Heart left ventricle (tissue), 16 donors: ENCODE measurements at regions of chr14 and their contacts with region 1.

Region 1: DNA sequence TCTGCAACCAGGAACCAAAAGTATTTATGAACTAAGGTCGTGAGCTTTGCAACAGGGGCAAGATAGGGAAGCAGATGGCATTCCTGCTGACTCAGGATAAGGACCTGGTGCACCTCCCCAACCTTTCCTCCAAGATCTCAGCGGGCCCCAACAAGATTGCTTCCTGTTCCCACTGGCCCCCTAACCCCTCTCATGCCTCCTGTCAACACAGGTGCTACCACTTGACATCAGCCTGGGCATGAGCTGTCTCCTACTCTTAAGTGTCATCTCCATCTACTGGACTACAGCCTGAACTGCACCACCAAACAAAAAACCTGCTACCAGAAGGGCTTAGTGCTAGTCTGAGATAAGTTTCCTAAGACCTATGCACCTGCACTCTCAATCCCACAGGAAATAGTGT is 32.7 kb downstream of the MED6 start:
- DNase-seq: no peak
- ATAC-seq: peak in 2 of 4 donors; percentile 55 to 63
- H3K4me3 ChIP-seq: no peak overlapping the region
- H3K27ac ChIP-seq: no peak overlapping the region
- H3K4me1 ChIP-seq: peaks cover 0 to 4% (median 0%) of the 10 kb centered on the region in 12 donors
- H3K27me3 ChIP-seq: no peaks in the 10 kb centered on the region
- CTCF ChIP-seq: peak in 11 of 12 donors; percentile 14 to 44 (median 29)
- POLR2A ChIP-seq: no peak

Region 2: DNA sequence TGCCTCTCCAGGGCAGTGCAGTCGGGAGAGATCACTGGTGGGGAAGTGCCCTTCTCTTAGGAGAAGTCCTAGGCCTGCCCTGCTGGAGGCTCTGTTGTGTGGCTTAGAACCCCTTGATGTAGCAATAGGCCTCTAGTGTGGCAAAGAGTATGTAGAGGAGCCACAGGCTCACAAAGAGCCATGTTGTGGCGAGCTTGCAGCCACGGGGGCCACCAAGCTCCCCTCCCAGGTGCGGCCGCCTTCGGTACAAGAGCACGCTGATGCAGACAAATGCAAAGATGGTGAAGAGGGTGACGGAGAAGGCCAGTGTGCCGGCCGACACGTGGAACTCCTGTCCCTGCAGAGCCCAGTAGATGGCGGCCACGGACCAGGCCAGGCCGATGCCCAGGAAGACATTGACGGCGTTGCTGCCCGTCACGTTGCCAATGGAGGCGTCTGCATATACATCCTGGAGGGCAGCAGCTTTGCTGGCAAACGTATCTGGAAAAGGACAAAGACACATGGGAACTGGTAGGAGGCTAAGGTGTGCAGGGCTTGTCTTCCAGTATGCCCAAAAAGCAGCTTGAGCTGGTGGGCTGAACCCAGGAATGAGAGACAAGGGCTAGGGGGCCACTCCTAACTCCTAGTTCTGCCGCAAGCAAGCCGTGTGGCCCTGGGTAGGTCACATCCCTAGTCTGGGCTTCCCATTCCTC is 521.8 kb before region 1 on chr14:
- intact Hi-C with region 1: loop called in 1 of 10 experiments (anchors 5 kb)
- DNase-seq: peak in 4 of 5 donors; percentile 37 to 71 (median 48)
- ATAC-seq: peak in 3 of 4 donors; percentile 80 to 89 (median 89)
- H3K4me3 ChIP-seq: no peak overlapping the region
- H3K27ac ChIP-seq: no peak overlapping the region
- H3K4me1 ChIP-seq: no peaks in the 10 kb centered on the region
- H3K27me3 ChIP-seq: peaks cover 0 to 39% (median 7%) of the 10 kb centered on the region in 9 donors
- CTCF ChIP-seq: peak; percentile 45 to 73 (median 58)
- POLR2A ChIP-seq: no peak

Region 3: DNA sequence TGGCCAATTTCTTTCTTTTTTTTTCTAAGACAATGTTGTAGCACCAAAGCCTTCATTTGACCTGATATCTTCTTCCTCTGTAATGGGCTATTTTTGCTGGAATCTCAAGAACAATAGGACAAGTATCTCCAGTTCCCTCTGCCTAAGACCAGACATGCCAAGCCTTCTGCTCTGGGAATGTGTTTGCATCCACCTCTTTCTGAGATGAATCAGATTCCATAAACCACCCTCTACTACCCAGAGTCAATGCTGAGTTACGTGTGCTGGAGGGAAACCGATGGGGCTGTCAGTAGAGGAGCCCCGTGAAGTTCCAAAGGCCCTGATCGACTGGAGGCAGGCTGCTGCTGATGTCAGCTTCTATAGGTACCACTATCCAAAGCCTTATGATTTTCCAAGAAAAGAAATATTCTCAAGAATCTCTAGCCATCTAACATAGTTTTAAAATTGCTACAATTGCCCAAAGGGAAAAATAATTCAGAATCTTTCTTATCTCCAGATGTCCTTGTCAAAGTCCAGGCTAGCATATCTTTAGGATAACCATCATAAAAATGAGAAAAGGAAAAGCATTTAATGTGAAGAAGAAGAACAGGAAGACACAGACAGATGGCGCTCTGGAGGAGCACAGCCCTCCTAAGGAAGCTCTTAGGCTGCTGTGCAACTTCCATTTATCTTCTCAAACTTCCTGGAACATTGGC is 481.0 kb before region 1 on chr14:
- intact Hi-C with region 1: loop called in 1 of 10 experiments (anchors 10 kb)
- DNase-seq: no peak
- ATAC-seq: peak in 1 of 4 donors; percentile 38
- H3K4me3 ChIP-seq: no peak overlapping the region
- H3K27ac ChIP-seq: no peak overlapping the region
- H3K4me1 ChIP-seq: no peaks in the 10 kb centered on the region
- H3K27me3 ChIP-seq: peaks cover 0 to 52% (median 1%) of the 10 kb centered on the region in 9 donors
- CTCF ChIP-seq: peak in 10 of 12 donors; percentile 30 to 55 (median 46)
- POLR2A ChIP-seq: no peak

Region 4: DNA sequence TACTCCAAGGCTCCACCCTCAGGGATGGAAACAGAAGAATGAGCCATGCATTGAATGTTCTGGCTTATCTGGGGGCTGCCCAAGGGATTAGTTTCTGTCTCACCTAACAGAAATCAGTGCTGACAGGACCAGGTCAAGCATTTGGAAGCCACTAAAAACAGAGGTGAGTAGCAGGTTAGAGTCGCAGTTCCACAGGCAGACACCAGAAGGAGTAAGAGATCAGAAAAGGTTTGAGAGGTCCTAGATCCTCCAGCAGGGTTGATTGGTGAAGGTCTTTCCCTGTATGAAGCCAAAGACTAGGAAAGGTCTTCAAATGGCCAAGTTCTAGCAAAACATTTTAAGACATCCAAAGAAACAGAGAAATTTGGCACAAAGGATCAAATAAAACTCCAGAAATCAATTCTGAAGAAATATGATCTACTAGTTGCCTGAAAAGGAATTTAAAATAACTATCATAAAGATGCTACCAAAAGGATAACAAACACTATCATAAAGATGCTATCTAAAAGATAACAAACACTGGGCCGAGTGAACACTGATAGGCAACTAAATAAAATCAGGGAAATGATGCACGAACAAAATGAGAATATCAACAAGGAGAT is 54.4 kb after region 1 on chr14:
- intact Hi-C with region 1: no loop called
- DNase-seq: no peak
- ATAC-seq: peak in 3 of 4 donors; percentile 47 to 77 (median 56)
- H3K4me3 ChIP-seq: no peak overlapping the region
- H3K27ac ChIP-seq: no peak overlapping the region
- H3K4me1 ChIP-seq: peaks cover 0 to 7% (median 0%) of the 10 kb centered on the region in 12 donors
- H3K27me3 ChIP-seq: no peaks in the 10 kb centered on the region
- CTCF ChIP-seq: peak; percentile 45 to 70 (median 62)
- POLR2A ChIP-seq: no peak

Region 5: GRCh38 chr14:70640938-70641547 is 73.3 kb after region 1 on chr14:
- intact Hi-C with region 1: no loop called
- DNase-seq: peak in 2 of 5 donors; percentile 53 to 62
- ATAC-seq: peak in 3 of 4 donors; percentile 67 to 92 (median 74)
- H3K4me3 ChIP-seq: peak overlapping the region; percentile 46 to 90 (median 72)
- H3K27ac ChIP-seq: no peak overlapping the region
- H3K4me1 ChIP-seq: peaks cover 0 to 19% (median 9%) of the 10 kb centered on the region in 12 donors
- H3K27me3 ChIP-seq: peaks cover 0 to 47% (median 4%) of the 10 kb centered on the region in 9 donors
- CTCF ChIP-seq: no peak
- POLR2A ChIP-seq: no peak